ENCODE measurements at regions of chr12 and their contacts with region 1.

Region 1: DNA sequence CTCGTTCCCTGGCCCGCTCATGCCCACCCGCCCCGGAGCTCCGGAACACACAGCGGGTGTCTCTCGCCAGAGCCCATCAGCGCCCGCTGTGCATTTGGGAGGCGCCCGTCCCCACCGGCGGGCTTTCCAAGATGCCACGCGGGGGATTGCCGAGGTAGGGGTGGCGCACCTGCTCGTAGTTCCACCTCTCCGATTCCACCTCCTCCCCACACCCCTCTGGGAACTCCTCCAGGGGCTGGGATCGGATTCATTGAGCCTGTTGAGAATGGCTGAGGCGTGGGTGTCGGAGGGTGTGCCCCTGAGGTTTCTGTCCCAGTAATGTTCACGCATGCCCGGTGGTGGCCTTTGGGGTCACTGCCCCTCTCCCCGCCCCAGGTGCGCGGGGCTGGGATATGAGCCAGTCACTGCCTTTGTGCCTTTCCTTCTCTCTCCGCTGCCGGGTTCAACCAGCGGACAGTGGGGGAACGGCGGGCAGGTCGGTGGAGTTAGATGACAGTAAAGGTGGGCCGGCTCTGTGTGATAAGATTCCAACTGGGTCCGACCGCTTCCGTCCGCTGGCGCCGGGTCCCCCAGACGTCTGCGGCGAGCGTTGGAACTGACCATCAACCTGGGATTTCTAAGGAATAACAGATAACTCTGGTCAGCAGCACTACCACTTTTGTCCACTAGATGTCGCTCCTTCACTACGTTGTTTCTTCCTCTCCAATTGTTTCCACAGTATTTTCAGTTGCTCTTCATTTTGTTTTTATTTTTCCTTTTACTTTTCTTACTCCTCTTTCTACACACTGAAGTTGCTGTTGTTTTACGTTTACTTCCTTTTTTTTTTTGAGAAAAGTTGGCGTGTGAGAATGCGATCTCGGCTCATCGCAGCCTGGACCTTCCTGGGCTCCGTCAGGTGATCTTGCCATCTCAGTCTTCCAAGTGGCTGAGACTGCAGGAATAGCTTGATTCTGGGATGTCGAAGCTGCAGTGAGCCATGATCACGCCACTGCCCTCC is 178.1 kb upstream of the ALG10B start:
- DNase-seq: peak; percentile 54 to 76
- H3K4me3 ChIP-seq: peak overlapping the region; percentile 57
- H3K27ac ChIP-seq: no peak overlapping the region
- H3K4me1 ChIP-seq: peaks cover 14% of the 10 kb centered on the region
- H3K27me3 ChIP-seq: no peaks in the 10 kb centered on the region
- CTCF ChIP-seq: peak; percentile 94

Region 2: GRCh38 chr12:37672655-37673260 is 465.8 kb before region 1 on chr12:
- CTCF ChIA-PET with region 1: no interaction called
- POLR2A ChIA-PET with region 1: no interaction called
- intact Hi-C with region 1: loop called (anchors 5 kb)
- DNase-seq: no peak
- H3K4me3 ChIP-seq: no peak overlapping the region
- H3K27ac ChIP-seq: no peak overlapping the region
- H3K4me1 ChIP-seq: no peaks in the 10 kb centered on the region
- H3K27me3 ChIP-seq: no peaks in the 10 kb centered on the region
- CTCF ChIP-seq: peak; percentile 77

Region 3: DNA sequence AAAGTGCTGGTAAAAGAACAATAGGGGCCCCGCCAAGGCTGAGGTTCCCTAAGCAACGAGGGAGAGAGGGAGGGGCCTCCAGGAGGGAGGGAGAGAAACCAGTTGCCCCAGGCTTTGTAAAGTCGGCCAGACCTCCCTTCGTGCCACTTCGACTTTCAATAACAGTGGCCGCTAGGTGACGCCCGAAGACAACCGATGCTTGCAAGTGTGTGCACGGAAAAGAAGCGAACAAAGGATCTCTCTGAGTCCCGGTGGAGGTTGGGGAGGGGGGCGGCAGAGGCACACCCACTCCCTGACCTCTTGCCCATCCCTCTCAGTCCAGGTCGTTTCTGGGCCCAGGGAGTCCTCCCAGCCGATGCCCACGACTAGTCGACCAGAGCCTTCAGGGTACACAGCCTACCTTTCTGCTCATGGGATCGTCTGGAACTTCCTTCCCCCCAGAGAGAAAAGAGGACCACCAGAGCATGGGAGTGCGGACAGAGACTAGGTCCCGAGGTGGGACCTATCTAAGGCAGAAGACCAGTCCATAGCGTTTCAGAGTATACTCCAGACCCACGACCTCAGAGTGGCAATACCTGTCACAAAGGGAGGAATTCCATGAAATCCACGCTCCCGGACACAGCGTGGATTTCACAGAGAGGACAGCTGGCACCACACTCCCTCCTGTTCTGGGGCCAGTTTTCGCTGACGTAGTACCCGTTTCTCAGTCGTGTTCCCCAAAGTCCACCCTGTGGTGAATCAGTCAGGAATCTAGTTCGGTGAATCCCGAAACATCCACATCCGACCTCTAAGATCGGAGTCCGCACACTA is 84.7 kb before region 1 on chr12:
- CTCF ChIA-PET with region 1: no interaction called
- POLR2A ChIA-PET with region 1: no interaction called
- intact Hi-C with region 1: loop called (anchors 1 kb)
- DNase-seq: peak; percentile 70 to 82
- H3K4me3 ChIP-seq: peak overlapping the region; percentile 41; the same call in 1 of the 2 replicates
- H3K27ac ChIP-seq: no peak overlapping the region
- H3K4me1 ChIP-seq: peaks cover 17% of the 10 kb centered on the region
- H3K27me3 ChIP-seq: no peaks in the 10 kb centered on the region
- CTCF ChIP-seq: peak; percentile 88

Region 4: GRCh38 chr12:38316391-38317129 is 178.0 kb after region 1 on chr12 and contains the start of gene ALG10B:
- CTCF ChIA-PET with region 1: no interaction called
- POLR2A ChIA-PET with region 1: no interaction called
- intact Hi-C with region 1: loop called (anchors 1 kb)
- DNase-seq: peak; percentile 88 to 91
- H3K4me3 ChIP-seq: peak within 1 kb of the TSS; percentile 60
- H3K27ac ChIP-seq: peak within 1 kb of the TSS; percentile 37
- H3K4me1 ChIP-seq: peaks cover 7% of the 10 kb centered on the region; the same call in 1 of the 2 replicates
- H3K27me3 ChIP-seq: no peaks in the 10 kb centered on the region
- CTCF ChIP-seq: peak; percentile 82
- total RNA-seq, gene ALG10B: 13.1 and 14.4 TPM in 2 replicates

Measured in PC-9 (cell line).